ENCODE measurements at regions of chr7 and their contacts with region 1.

Region 1: DNA sequence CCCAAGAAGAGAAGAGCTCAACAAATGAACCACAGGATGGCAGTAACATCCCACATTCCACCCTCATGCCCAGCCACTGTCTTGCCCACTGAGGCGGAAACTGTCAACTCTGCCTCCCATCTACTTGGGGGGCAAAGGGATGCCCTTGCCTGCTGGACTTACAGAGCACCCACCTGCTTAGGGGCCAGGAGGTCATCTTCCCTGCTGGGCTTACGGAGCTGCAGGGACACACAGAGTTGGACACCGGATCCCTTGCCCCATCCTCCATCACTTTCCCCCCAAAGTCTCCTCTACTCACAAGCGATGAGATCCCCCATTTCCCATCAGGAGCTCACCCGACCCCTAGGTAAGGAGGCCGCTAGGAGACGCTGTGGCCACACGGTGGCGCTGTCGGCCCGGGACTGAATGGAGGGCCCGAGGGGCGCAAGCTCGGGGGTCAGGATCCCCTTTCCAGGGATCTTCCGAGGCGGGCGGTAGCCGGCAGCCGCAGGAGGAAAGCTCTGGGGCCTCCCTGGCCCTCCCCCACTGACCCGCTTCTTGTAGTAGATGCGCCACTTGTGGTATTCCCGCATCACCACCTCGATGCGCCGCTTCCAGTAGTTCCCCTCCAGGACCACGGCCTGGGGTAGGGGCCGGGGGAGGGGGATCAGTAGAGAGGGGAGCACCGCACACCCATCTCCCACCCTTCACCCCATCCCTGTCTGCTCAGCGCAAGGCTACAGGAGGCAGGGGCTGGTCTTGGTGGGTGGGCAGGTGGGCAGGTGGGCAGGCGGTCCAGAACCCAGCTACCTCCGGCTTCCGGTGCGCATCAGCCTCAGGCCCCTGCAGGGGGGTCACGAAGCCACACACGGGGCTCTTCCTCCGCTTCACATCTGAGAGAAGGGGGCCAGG is 17.3 kb downstream of the MLXIPL start:
- DNase-seq: peak; percentile 32 to 65
- ATAC-seq: peak; percentile 61 to 85 (median 74)
- H3K4me3 ChIP-seq: no peak overlapping the region
- H3K27ac ChIP-seq: no peak overlapping the region
- H3K4me1 ChIP-seq: peaks cover 0 to 7% (median 0%) of the 10 kb centered on the region in 9 donors
- H3K27me3 ChIP-seq: peaks cover 5 to 63% (median 47%) of the 10 kb centered on the region in 7 donors
- CTCF ChIP-seq: peak; percentile 89 to 98 (median 93)

Region 2: GRCh38 chr7:73667344-73668102 is 60.5 kb after region 1 on chr7 and contains the start of gene VPS37D:
- intact Hi-C with region 1: loop called in 6 of 10 experiments (anchors 1 to 10 kb)
- DNase-seq: peak; percentile 87 to 95
- ATAC-seq: peak; percentile 88 to 97 (median 95)
- H3K4me3 ChIP-seq: peak within 1 kb of the TSS; percentile 53 to 93 (median 60)
- H3K27ac ChIP-seq: peak within 1 kb of the TSS in 1 of 10 donors; percentile 34
- H3K4me1 ChIP-seq: peaks cover 0 to 15% (median 10%) of the 10 kb centered on the region in 9 donors
- H3K27me3 ChIP-seq: peaks cover 0 to 58% (median 0%) of the 10 kb centered on the region in 7 donors
- CTCF ChIP-seq: peak; percentile 58 to 96 (median 78)
- total RNA-seq, gene VPS37D: 1.1 to 3.6 (median 2.2) TPM

Region 3: DNA sequence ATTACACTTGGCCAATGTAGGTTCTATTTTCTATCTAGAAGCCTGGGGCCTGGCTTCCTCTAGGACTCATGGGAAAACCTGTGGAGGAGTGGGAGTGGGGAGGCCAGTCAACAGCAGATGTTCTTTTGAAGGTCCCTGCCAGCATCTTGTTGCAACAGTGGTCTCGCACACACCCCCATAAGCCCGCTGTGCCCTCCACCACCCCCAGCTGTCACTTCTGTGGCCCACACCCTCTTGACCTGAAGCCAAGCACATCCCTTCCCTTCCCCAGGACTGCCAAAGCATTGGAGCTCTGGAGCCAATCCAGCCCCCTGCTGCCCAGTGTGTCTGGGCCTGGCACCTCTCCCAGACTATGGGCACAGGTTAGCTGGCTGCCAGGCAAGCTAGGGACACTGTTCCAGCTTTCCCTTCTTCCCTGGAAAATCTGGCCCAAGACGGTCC is 114.4 kb after region 1 on chr7:
- intact Hi-C with region 1: loop called (anchors 1 to 5 kb)
- DNase-seq: peak; percentile 72 to 78
- ATAC-seq: peak; percentile 21 to 89 (median 82)
- H3K4me3 ChIP-seq: no peak overlapping the region
- H3K27ac ChIP-seq: peak overlapping the region in 7 of 10 donors; percentile 15 to 63 (median 25)
- H3K4me1 ChIP-seq: peaks cover 0 to 44% (median 24%) of the 10 kb centered on the region in 9 donors
- H3K27me3 ChIP-seq: peaks cover 0 to 52% (median 6%) of the 10 kb centered on the region in 7 donors
- CTCF ChIP-seq: no peak

Region 4: GRCh38 chr7:73858807-73859206 is 251.8 kb after region 1 on chr7:
- intact Hi-C with region 1: loop called in 7 of 10 experiments (anchors 5 to 10 kb)
- DNase-seq: no peak
- ATAC-seq: no peak
- H3K4me3 ChIP-seq: no peak overlapping the region
- H3K27ac ChIP-seq: no peak overlapping the region
- H3K4me1 ChIP-seq: peaks cover 0 to 8% (median 6%) of the 10 kb centered on the region in 9 donors
- H3K27me3 ChIP-seq: peaks cover 0 to 24% (median 11%) of the 10 kb centered on the region in 7 donors
- CTCF ChIP-seq: no peak

Measured in heart right ventricle (tissue), 16 donors.